Activated CD4-positive, alpha-beta memory T cell treated with anti-CD3 and anti-CD28 coated beads for 36 hours (primary cell): ENCODE measurements at regions of chr18 and their contacts with region 1.

Region 1: DNA sequence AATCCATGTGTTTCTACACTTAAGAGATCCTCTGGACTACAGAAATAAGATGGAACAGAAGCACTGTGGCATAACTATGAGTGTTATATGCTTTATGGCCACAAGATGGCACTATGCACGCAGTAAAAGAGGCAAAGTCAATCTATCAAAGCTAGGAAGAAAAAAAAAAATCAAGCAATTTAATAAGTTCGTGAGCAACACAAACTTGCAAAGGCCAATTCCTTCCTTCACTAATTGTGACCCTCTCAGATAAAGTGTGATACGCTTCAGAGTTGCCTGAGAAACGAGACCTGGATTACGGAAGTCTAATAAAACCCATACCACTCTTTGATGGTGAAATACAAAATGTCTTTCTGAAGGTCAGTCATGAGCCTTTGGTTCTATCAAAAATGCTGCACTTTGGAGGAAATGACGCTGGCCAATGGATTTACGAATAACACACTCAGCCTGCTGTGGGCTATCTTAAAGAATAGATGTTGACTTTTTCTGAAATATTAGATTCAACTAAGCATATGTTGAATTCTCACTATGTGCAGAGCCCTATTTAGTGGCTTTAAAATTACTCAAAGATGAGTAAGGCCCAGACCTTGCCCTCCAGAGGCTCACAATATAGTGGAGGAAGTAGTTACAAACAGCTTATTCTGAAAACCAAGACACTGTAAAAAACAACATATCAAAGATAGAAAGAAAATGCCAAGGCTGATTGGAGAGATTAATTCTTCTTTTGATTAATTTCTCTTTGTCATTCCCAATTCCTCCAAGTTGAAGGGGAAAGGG is 35.5 kb upstream of the TTR start:
- DNase-seq: peak; percentile 40
- H3K4me3 Mint-ChIP-seq: no peak overlapping the region
- H3K27ac Mint-ChIP-seq: no peak overlapping the region
- H3K4me1 Mint-ChIP-seq: no peaks in the 10 kb centered on the region
- H3K27me3 Mint-ChIP-seq: peaks cover 8% of the 10 kb centered on the region

Region 2: GRCh38 chr18:31206787-31207381 is 349.3 kb before region 1 on chr18:
- CTCF ChIA-PET with region 1: no interaction called
- POLR2A ChIA-PET with region 1: no interaction called
- intact Hi-C with region 1: no loop called
- DNase-seq: no peak
- H3K4me3 Mint-ChIP-seq: no peak overlapping the region
- H3K27ac Mint-ChIP-seq: no peak overlapping the region
- H3K4me1 Mint-ChIP-seq: no peaks in the 10 kb centered on the region
- H3K27me3 Mint-ChIP-seq: no peaks in the 10 kb centered on the region

Region 3: DNA sequence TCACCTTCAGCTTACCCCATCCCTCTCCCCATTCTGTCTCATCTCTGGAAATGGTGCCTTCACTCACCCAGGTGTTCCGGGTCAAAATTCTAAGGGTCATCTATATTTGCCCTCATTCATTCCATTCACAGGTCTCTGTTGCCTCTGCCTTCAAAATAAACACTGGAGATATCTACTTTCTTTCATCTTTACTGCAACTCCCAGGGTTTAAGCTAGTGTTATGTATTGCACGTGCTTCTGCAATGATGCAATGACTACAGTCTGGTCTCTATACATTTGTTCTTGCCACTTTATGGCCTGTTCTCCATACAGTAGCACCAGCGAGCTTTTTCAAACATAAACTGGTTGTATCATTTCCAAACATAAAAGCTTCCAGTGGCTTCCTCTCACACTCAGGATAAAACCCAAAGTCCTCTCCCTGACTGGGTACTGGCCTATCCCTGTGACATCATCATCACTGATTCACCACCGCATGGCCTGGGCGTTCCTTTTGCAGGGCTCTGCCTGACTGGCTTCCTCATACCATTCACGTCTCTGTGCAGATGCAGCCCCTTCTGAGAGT is 43.9 kb before region 1 on chr18:
- CTCF ChIA-PET with region 1: no interaction called
- POLR2A ChIA-PET with region 1: no interaction called
- intact Hi-C with region 1: no loop called
- DNase-seq: no peak
- H3K4me3 Mint-ChIP-seq: no peak overlapping the region
- H3K27ac Mint-ChIP-seq: no peak overlapping the region
- H3K4me1 Mint-ChIP-seq: no peaks in the 10 kb centered on the region
- H3K27me3 Mint-ChIP-seq: peaks cover 5% of the 10 kb centered on the region

Region 4: GRCh38 chr18:31722369-31722957 is 166.3 kb after region 1 on chr18:
- CTCF ChIA-PET with region 1: interaction called, 186 read pairs
- POLR2A ChIA-PET with region 1: no interaction called
- intact Hi-C with region 1: loop called (anchors 1 kb)
- DNase-seq: peak; percentile 87
- H3K4me3 Mint-ChIP-seq: no peak overlapping the region
- H3K27ac Mint-ChIP-seq: no peak overlapping the region
- H3K4me1 Mint-ChIP-seq: peaks cover 5% of the 10 kb centered on the region
- H3K27me3 Mint-ChIP-seq: peaks cover 20% of the 10 kb centered on the region

Region 5: DNA sequence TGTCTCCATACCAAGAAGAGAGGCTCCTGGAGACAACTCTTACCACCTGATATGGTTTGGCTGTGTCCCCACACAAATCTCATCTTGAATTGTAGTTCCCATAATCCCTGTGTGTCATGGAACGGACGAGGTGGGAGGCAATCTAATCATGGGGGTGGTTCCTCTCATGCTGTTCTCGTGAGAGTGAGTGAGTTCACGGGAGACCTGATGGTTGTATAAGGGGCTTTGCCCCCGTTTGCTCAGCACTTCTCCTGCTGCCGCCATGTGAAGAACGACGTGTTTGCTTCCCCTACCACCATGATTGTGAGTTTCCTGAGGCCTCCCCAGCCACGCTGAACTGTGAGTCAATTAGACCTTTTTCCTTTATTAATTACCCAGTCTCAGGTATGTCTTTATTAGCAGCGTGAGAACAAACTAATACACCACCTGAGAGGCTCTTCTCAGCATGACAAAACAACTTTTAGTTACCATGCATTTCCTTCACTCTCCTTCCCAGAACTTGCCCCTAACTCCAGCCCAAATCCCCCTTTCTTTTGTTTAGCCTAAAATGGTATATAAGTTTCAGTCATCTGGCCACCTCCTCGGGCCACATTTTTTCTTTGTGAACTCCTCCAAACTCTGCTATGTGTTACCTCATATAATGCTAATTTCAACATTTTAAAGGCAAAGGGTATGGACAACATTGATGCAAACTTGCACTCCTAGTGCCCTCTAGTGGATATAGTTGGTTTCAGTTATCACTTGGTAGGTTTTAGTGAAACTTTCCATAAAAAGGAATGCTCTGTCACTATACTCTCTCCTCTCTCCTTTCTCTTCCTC is 263.2 kb after region 1 on chr18:
- CTCF ChIA-PET with region 1: interaction called, 18 read pairs
- POLR2A ChIA-PET with region 1: no interaction called
- intact Hi-C with region 1: loop called (anchors 1 kb)
- DNase-seq: no peak
- H3K4me3 Mint-ChIP-seq: no peak overlapping the region
- H3K27ac Mint-ChIP-seq: no peak overlapping the region
- H3K4me1 Mint-ChIP-seq: no peaks in the 10 kb centered on the region
- H3K27me3 Mint-ChIP-seq: peaks cover 2% of the 10 kb centered on the region

Region 6: DNA sequence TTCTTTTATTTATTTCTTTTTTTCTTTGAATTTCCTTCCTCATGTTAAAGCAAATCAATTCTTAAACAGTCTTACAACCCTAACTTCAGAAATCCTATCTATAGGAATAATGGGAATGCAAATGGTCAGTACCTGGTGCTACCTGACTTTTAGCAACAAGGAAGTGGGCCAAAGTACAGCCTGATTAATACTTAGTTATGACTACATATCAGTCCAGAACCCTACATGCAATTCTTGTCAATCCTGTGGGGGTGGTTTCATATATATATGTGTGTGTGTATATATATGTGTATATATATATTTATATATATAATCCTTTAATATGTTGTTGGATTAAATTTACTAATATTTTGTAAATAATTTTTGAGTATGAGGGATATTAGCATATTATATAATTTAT is 401.6 kb after region 1 on chr18:
- CTCF ChIA-PET with region 1: no interaction called
- POLR2A ChIA-PET with region 1: no interaction called
- intact Hi-C with region 1: loop called (anchors 5 kb)
- DNase-seq: no peak
- H3K4me3 Mint-ChIP-seq: no peak overlapping the region
- H3K27ac Mint-ChIP-seq: no peak overlapping the region
- H3K4me1 Mint-ChIP-seq: peaks cover 2% of the 10 kb centered on the region
- H3K27me3 Mint-ChIP-seq: no peaks in the 10 kb centered on the region